Vagina (tissue), 2 donors: ENCODE measurements at regions of chr4 and their contacts with region 1.

Region 1: DNA sequence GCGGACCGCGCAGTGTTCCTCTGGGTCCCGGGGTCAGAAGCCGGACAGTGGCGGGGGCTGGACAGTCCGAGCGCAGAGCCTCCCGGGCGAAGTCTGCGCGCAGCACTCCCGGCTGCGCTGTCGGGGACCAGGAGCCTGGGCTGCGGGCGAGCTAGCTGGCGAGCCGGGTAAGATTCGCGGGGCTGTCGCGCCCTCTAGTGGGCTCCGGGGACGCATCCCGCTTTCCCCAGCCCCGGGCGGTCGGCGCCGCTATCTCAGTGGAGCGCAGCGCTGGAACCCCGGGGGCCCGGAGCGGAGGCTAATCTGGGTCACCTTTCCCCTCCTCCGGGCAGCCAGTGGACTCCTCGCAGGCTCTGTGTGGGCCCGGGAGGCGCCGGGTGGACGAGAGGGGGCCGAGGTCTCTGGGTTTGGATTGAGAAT is 4.2 kb downstream of the PDGFRA start:
- DNase-seq: peak in 1 of 2 donors; percentile 86
- H3K4me3 ChIP-seq: peak overlapping the region; percentile 56 to 65
- H3K27ac ChIP-seq: peak overlapping the region; percentile 87
- H3K4me1 ChIP-seq: peaks cover 53% of the 10 kb centered on the region
- H3K27me3 ChIP-seq: peaks cover 10% of the 10 kb centered on the region
- CTCF ChIP-seq: peak; percentile 43 to 81 (median 75)
- POLR2A ChIP-seq: no peak

Region 2: GRCh38 chr4:53196882-53197771 is 1036.2 kb before region 1 on chr4:
- intact Hi-C with region 1: loop called (anchors 2 kb)
- DNase-seq: no peak
- H3K4me3 ChIP-seq: no peak overlapping the region
- H3K27ac ChIP-seq: no peak overlapping the region
- H3K4me1 ChIP-seq: peaks cover 10% of the 10 kb centered on the region
- H3K27me3 ChIP-seq: no peaks in the 10 kb centered on the region
- CTCF ChIP-seq: peak; percentile 57 to 70 (median 69)
- POLR2A ChIP-seq: no peak

Region 3: DNA sequence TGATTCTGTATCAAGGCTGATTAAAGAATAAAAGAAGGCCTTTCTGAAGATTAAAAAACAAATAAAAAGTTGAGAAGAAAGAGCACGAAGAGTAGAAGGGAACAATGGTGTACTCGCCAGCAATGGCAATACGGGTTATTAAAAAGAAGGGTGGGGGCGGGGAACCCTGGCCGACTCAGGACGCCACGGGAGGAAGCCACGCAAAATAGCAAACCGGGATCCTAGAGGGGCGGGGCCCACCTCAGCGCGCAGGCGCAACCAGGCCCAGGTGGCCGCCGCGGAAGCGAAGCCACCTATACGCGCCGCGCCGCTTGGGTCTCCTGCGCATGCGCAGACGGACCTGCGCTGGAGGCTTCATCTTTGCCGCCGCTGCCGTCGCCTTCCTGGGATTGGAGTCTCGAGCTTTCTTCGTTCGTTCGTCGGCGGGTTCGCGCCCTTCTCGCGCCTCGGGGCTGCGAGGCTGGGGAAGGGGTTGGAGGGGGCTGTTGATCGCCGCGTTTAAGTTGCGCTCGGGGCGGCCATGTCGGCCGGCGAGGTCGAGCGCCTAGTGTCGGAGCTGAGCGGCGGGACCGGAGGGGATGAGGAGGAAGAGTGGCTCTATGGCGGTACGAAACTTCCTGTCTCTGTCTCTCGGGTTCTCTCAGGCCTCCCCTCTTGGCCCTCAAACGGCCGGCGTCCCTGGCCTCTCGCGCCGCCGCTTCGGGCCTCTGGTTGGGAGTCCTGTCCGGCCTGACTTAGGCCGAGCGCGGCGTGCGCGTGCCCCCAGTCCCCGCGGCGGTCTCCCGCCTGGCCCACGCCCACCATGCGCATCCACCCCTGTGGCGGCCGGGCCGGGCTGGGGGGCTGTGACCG is 855.7 kb before region 1 on chr4 and contains the start of gene FIP1L1:
- intact Hi-C with region 1: loop called (anchors 10 kb)
- DNase-seq: peak; percentile 92 to 97
- H3K4me3 ChIP-seq: peak within 1 kb of the TSS; percentile 80 to 93
- H3K27ac ChIP-seq: peak within 1 kb of the TSS; percentile 86
- H3K4me1 ChIP-seq: peaks cover 23% of the 10 kb centered on the region
- H3K27me3 ChIP-seq: no peaks in the 10 kb centered on the region
- CTCF ChIP-seq: peak in 1 of 3 experiments; percentile 4
- POLR2A ChIP-seq: peak in 1 of 2 donors; percentile 78
- total RNA-seq, gene FIP1L1: 31.7 TPM

Region 4: DNA sequence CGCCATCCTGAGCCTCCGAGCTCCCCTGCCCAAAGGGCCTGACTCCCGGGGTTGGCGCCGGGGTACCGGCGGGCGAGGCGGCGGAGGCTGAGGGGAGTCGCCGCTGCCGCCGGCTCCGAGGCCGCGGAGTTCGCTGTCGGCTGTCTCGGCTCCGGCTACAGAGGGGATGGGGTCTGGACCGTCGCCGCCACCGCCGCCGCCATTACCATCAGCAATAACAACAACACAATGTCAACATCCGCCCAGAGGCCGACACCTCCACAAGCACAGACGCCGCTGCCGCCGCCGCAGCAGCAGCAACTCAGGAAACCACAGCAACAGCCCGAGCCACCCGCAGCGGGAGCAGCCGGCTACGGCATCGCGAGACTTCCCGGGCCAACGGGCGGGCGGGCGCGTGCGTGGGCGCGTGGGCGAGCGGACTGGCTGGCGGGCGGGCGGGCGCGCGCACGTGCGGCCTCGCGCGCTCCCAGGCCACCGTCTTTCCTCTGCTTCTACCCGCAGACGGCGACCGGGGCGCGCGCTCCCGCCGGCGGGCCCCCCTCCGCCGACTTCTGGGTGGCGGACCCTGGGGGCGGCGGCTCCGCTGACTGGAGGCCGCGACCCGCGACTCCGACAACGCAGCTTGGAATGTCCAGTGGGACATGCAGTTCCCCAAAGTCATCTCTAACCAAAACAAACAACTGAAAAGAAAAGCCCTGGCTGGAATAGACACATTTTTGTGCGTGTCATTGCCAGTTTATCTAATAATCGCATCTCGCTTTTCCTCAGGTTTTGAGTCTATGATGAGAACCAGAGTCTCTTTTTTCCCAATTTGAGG is 168.8 kb before region 1 on chr4 and contains the start of gene CHIC2:
- intact Hi-C with region 1: loop called (anchors 10 kb)
- DNase-seq: peak in 1 of 2 donors; percentile 94
- H3K4me3 ChIP-seq: peak within 1 kb of the TSS; percentile 75 to 94
- H3K27ac ChIP-seq: peak within 1 kb of the TSS; percentile 96
- H3K4me1 ChIP-seq: peaks cover 47% of the 10 kb centered on the region
- H3K27me3 ChIP-seq: no peaks in the 10 kb centered on the region
- CTCF ChIP-seq: no peak
- POLR2A ChIP-seq: peak in 1 of 2 donors; percentile 90
- total RNA-seq, gene CHIC2: 40.0 TPM

Region 5: GRCh38 chr4:54296548-54297203 is 63.4 kb after region 1 on chr4:
- intact Hi-C with region 1: no loop called
- DNase-seq: no peak
- H3K4me3 ChIP-seq: no peak overlapping the region
- H3K27ac ChIP-seq: no peak overlapping the region
- H3K4me1 ChIP-seq: no peaks in the 10 kb centered on the region
- H3K27me3 ChIP-seq: no peaks in the 10 kb centered on the region
- CTCF ChIP-seq: no peak
- POLR2A ChIP-seq: no peak